Activated CD8-positive, alpha-beta T cell treated with anti-CD3 and anti-CD28 coated beads, Interleukin-2, amount 10 ng/mL, durations not matched to agents 7 days and 5 days (primary cell): ENCODE measurements at regions of chr22 and their contacts with region 1.

Region 1: GRCh38 chr22:44735540-44736488 is 16.6 kb upstream of the ARHGAP8 start:
- DNase-seq: peak; percentile 87
- ATAC-seq: peak; percentile 76
- H3K4me3 Mint-ChIP-seq: no peak overlapping the region
- H3K27ac Mint-ChIP-seq: no peak overlapping the region
- H3K4me1 Mint-ChIP-seq: peaks cover 3% of the 10 kb centered on the region
- H3K27me3 Mint-ChIP-seq: no peaks in the 10 kb centered on the region

Region 2: DNA sequence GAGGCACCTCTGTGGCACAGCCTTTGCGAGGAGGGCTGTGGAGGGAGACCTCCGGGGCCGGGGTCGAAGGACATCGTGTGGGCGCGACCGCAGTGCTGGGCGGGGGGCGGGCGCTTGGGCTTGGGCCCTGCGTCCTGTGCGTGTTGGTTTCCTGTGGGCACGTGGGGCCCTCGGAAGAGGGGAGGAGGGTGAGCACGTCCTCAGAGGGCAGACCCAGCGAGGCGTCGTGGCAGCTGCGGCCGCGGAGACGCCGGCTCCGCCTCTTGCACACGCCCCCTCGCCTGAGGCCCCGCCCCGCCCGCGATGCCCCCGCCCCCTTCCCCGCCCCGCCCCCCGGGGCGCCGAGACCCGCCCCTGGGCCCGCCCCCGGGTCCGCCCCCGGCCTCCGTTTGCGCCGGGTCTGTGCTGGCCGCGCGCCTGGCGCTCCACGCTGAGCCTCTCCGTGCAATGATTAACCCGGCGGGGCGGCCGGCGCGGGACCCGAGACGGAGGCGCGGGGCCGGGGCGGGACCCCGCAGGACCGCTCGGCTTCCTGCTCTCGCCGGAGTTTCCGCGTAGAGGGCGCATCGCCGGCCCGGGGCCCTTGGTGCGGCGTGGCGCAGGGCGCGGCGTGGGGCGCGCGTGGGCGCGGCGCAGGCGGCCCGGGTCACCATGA is 33.9 kb before region 1 on chr22 and contains the start of gene PRR5:
- CTCF ChIA-PET with region 1: interaction called, 48 read pairs
- POLR2A ChIA-PET with region 1: no interaction called
- DNase-seq: peak; percentile 91
- ATAC-seq: peak; percentile 90
- H3K4me3 Mint-ChIP-seq: peak within 1 kb of the TSS; percentile 69
- H3K27ac Mint-ChIP-seq: peak within 1 kb of the TSS; percentile 83
- H3K4me1 Mint-ChIP-seq: peaks cover 32% of the 10 kb centered on the region
- H3K27me3 Mint-ChIP-seq: no peaks in the 10 kb centered on the region
- total RNA-seq, gene PRR5: 29.4 to 31.5 TPM